ENCODE measurements at regions of chr16 and their contacts with region 1.

Region 1: DNA sequence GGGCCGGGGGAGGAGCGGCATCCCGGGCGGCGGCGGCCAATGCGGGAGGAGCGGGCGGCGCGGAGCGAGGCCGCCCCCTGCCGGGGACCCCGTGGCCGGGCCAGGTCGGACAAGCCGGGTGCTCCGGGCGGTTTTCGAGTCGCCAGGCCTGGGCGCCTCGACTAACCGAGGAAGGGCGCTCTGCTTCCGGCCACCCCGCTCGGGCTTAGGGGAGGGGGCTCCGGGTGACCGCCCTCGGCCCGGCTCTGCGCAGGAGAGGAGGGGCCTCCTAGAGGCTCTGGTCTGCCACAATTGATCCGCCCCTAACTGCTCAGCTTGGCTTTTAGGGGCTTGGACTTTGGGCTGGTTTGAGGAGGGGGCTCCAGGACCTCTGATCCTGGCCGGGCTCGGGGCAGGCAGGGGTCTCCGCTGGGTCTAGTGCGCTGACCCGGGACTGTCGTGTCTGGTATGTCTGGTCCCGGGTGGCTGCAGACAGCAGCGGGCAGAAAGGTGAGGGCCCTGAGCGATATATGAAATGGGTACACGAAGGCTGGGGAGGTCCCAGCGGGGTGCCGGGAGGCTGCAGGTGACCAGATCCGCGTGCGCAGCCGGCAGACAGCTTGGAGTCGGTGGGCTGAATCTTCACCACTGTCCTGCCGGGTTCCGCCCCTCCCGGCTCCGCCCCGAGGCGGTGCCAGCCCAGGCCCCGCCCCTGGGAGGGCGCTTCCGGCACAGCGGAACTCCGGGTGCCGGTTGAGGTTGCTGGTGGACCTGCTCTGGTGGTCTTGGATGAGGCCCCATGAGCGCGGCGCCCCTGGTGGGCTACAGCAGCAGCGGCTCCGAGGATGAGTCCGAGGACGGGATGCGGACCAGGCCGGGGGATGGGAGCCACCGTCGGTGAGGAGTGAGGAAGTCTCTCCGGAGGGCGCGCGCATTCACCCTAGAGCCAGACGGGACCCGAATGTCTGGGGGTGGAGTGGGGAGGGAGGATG is at the start of gene USB1:
- DNase-seq: peak; percentile 76 to 86
- H3K4me3 ChIP-seq: peak within 1 kb of the TSS; percentile 52 to 60
- H3K27ac ChIP-seq: peak within 1 kb of the TSS; percentile 87
- H3K4me1 ChIP-seq: no peaks in the 10 kb centered on the region
- H3K27me3 ChIP-seq: no peaks in the 10 kb centered on the region
- CTCF ChIP-seq: peak; percentile 59 to 88 (median 70)
- POLR2A ChIP-seq: peak; percentile 46 to 77
- total RNA-seq, gene USB1: 2.0 to 34.9 (median 14.9) TPM

Region 2: GRCh38 chr16:57757326-57757786 is 243.6 kb before region 1 on chr16:
- intact Hi-C with region 1: loop called (anchors 5 kb)
- DNase-seq: peak; percentile 85 to 90
- H3K4me3 ChIP-seq: no peak overlapping the region
- H3K27ac ChIP-seq: no peak overlapping the region
- H3K4me1 ChIP-seq: no peaks in the 10 kb centered on the region
- H3K27me3 ChIP-seq: no peaks in the 10 kb centered on the region
- CTCF ChIP-seq: peak; percentile 94 to 99 (median 96)
- POLR2A ChIP-seq: no peak

Region 3: DNA sequence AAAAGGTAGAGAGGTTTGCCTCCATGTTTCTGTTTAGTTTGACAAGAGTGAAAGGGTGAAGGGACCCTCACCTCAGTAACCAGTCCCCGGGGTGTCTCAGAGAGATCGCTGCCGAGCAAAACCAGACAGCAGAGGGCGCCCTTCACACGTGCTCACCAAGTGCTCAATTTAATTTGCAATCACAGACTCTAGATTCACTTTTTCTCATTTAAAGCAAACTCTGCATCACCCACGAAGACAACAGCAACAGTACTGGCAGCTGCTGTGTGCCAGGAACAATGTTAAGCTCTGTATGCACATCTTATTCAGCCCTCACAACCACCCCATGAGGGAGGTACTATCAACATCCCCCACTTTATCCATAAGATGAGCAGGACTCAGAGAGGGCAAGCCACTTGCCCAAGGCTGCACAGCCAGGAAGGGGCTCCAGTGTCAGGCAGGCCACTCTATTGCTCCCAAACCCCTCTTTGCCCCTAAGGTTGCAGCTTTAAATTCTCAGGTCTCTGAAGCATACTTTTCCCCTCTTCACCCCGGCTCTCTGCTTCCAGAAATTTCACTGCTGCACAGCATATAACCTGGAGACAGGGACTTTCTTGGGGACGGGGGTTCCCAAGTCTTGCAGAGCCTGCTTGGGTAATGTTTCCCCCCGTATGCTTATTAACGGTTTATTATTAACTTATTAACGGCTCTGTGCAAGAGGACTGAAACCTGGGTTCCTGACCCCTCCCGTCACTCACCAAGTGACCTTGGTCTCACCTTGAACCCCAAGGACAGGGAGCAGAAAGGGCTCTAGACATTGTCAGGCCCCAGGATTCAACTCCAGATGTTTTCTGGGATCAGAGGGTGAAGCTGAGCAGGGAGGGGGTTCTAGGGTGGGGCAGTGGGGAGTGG is 101.0 kb before region 1 on chr16:
- intact Hi-C with region 1: loop called (anchors 5 kb)
- DNase-seq: peak; percentile 57 to 61
- H3K4me3 ChIP-seq: no peak overlapping the region
- H3K27ac ChIP-seq: no peak overlapping the region
- H3K4me1 ChIP-seq: no peaks in the 10 kb centered on the region
- H3K27me3 ChIP-seq: no peaks in the 10 kb centered on the region
- CTCF ChIP-seq: peak; percentile 63 to 78 (median 70)
- POLR2A ChIP-seq: no peak

Measured in uterus (tissue), 4 donors.